ENCODE measurements at regions of chr18 and their contacts with region 1.

Region 1: GRCh38 chr18:79679111-79679872 is at the start of gene CTDP1:
- DNase-seq: peak; percentile 97
- ATAC-seq: peak; percentile 93
- H3K4me3 ChIP-seq: peak within 1 kb of the TSS; percentile 87 to 88
- H3K27ac ChIP-seq: peak within 1 kb of the TSS; percentile 94
- H3K4me1 ChIP-seq: peaks cover 11 to 21% of the 10 kb centered on the region in 2 experiments; a peak in 3 of 4 replicates
- H3K27me3 ChIP-seq: no peaks in the 10 kb centered on the region
- CTCF ChIP-seq: no peak
- POLR2A ChIP-seq: peak; percentile 63
- RAD21 ChIP-seq: no peak
- total RNA-seq, gene CTDP1: 24.9 TPM

Region 2: DNA sequence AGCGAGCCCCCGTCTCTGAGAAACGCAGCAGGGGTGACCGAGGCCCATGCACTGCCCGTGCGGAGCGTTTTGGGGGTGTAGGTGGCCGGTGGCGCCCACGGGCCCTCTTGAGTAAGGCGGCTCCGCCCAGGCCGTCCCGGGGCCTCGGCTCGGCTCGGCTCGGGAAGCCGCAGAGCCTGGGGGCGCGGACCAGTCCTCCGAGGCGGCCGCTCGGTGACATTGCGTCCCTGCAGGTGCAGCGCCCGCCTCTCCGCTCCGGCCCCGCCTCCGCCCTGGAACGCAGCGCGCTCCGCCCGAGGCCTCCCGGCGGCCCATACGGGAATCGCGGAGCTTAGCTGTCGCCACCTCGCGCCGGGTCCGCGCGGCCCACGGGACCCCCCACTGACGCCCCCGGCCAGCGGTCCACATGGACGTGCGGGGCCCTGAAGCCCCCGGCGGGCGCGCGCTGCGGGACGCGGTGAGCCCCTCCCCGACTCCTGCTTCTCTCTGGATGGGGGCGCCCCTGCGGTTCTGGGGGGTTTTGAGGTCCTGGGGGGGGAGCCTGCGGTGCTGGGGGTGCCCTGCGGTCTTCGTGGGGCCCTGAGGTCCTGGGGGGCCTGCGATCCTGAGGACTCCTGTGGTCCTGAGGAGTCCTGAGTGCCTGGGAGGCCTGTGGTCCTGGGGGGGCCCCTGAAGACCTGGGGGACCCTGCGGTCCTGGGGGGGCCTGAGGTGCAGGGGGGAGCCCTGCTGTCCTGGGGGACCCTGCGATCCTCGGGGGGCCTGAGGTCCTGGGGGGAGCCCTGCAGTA is 285.2 kb after region 1 on chr18 and contains the start of gene HSBP1L1:
- CTCF ChIA-PET with region 1: no interaction called
- POLR2A ChIA-PET with region 1: no interaction called
- RAD21 ChIA-PET with region 1: no interaction called
- intact Hi-C with region 1: loop called (anchors 2 kb)
- DNase-seq: peak; percentile 48
- ATAC-seq: peak; percentile 85
- H3K4me3 ChIP-seq: peak within 1 kb of the TSS; percentile 76 to 83
- H3K27ac ChIP-seq: peak within 1 kb of the TSS; percentile 90
- H3K4me1 ChIP-seq: peaks cover 43 to 76% of the 10 kb centered on the region in 2 experiments
- H3K27me3 ChIP-seq: no peaks in the 10 kb centered on the region
- CTCF ChIP-seq: peak in 2 of 3 experiments; percentile 19 to 22; a peak in 1 of 6 replicates
- POLR2A ChIP-seq: no peak
- RAD21 ChIP-seq: no peak
- total RNA-seq, gene HSBP1L1: 41.4 TPM

Region 3: DNA sequence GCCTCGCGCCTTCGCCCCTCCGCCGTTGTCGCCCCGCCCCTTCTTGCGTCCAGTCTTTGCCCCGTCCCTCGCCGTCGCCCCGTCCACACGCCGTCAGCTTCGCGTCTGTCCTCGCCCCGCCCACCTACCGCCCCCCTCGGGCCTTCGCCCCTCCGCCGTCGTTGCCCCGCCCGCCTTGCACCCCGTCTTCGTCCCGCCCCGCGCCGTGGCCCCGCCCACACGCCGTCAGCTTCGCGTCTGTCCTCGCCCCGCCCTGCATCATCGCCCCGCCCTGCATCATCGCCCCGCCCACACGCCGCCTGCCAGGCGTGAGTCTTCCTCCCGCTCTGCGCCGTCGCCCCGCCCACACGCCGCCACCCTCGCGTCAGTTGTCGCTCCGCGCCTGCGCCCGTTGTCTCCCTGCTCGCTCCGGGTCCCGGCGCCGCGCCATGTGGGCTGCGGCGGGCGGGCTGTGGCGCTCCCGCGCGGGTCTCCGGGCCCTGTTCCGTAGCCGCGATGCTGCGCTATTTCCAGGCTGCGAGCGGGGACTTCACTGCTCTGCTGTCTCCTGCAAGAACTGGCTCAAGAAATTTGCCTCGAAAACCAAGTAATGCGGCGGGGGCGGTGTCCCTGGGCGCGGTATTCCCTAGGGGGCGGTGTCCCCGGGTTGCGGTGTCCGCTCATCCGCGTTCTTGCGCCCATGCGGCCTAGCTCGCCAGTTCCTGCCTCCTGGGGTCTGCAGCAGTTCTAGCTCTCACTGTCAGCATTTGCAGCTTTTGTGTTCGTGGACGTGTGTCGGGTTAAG is 355.0 kb after region 1 on chr18 and contains the start of gene RBFA:
- CTCF ChIA-PET with region 1: no interaction called
- POLR2A ChIA-PET with region 1: no interaction called
- RAD21 ChIA-PET with region 1: no interaction called
- intact Hi-C with region 1: loop called (anchors 2 kb)
- DNase-seq: peak; percentile 94
- ATAC-seq: peak; percentile 87
- H3K4me3 ChIP-seq: peak within 1 kb of the TSS; percentile 72 to 89
- H3K27ac ChIP-seq: peak within 1 kb of the TSS; percentile 72
- H3K4me1 ChIP-seq: peaks cover 8 to 17% of the 10 kb centered on the region in 2 experiments; a peak in 3 of 4 replicates
- H3K27me3 ChIP-seq: no peaks in the 10 kb centered on the region
- CTCF ChIP-seq: peak in 2 of 3 experiments; percentile 45 to 53; a peak in 4 of 6 replicates
- POLR2A ChIP-seq: peak; percentile 86
- RAD21 ChIP-seq: peak; percentile 31; the same call in 1 of the 2 replicates
- total RNA-seq, gene RBFA: 45.3 TPM